HEK293 (cell line): ENCODE measurements at regions of chr6 and their contacts with region 1.

Region 1: GRCh38 chr6:11496152-11497060 is 41.1 kb upstream of the TMEM170B start:
- H3K4me3 ChIP-seq: no peak overlapping the region
- H3K27ac ChIP-seq: no peak overlapping the region
- H3K4me1 ChIP-seq: no peaks in the 10 kb centered on the region
- CTCF ChIP-seq: peak; percentile 83

Region 2: GRCh38 chr6:11144393-11144851 is 352.0 kb before region 1 on chr6:
- CTCF ChIA-PET with region 1: interaction called, 110 read pairs
- POLR2A ChIA-PET with region 1: interaction called, 3 read pairs
- H3K4me3 ChIP-seq: no peak overlapping the region
- H3K27ac ChIP-seq: no peak overlapping the region
- H3K4me1 ChIP-seq: no peaks in the 10 kb centered on the region
- CTCF ChIP-seq: peak; percentile 67; the same call in 1 of the 2 replicates

Region 3: DNA sequence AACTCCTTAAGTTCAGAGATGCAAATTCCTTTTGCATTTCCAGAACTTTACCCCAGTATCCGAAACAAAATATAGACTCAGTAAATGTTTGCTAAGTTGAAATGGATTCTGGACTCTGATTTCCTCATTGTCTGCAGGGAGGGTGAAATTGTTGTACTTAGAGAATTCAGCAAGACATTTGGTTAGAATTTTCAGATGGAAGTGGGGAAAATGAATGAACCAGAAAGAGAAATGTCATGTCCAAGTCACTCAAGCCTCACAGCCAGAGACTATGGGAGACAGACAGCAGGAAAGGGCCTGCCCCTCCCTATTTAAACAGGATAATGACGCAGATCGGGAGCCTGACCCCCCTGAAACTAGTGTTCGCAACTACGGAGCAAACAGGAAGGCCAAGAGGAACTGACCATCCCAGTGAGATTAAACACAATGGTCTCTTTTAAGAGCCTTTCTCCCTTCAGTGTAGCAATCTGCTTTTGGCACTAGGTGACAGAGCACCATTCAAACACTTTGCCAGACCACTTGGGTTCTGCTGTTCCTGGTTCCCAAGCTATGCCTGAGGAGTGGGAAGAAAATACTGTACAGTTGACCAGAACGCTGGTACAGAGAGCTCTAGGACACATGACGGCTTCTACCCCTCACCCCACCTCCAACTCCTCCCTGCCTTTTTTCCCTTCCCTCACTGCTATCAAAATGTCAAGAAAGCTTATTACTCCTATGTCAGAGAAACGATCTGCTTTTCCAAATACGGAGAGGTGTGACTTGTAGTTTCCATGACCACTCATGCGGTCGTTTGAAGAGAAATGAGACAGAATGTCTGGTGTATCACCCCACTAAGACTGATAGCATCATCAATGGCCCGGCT is 277.6 kb before region 1 on chr6:
- CTCF ChIA-PET with region 1: interaction called, 12 read pairs
- POLR2A ChIA-PET with region 1: no interaction called
- H3K4me3 ChIP-seq: no peak overlapping the region
- H3K27ac ChIP-seq: no peak overlapping the region
- H3K4me1 ChIP-seq: peaks cover 26% of the 10 kb centered on the region
- CTCF ChIP-seq: no peak

Region 4: DNA sequence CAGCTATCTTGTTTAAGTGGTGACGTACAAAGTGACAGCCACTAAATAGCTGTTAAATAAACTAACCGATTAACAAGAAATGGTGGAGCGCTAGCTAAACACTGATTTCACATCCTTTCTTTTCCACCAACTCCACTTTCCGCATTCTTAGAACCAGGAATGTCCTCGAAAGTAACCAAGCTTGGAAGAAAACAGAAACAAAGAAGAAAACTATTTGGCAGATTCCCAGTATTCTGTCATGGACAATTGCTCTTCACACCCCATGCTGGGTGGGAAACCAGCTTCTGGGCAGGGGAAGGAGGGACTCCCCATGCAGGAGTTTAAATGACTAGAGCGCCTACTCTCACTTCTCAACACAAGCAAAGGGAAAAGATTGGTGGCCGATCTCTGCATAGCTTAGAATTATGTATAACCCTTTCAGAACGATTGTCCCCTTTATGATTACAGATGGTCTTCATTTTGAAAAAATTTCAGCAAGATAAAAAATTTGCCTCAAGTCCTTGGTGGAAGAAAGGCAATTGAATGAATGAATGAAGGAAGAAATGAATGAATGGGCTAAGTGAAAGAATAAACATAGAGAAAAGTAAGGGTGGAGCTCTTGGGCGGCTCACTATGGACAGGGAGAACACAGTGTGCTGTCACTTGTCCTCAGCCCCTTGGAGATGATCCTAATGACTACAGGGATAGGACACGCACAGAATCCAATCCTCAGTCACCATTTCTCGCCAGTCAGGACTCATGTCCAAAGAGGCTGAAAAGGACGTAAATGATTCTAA is 115.2 kb before region 1 on chr6:
- CTCF ChIA-PET with region 1: interaction called, 12 read pairs
- POLR2A ChIA-PET with region 1: no interaction called
- H3K4me3 ChIP-seq: no peak overlapping the region
- H3K27ac ChIP-seq: no peak overlapping the region
- H3K4me1 ChIP-seq: no peaks in the 10 kb centered on the region
- CTCF ChIP-seq: no peak

Region 5: GRCh38 chr6:11473008-11473740 is 23.2 kb before region 1 on chr6:
- CTCF ChIA-PET with region 1: interaction called, 25 read pairs
- POLR2A ChIA-PET with region 1: no interaction called
- H3K4me3 ChIP-seq: no peak overlapping the region
- H3K27ac ChIP-seq: no peak overlapping the region
- H3K4me1 ChIP-seq: no peaks in the 10 kb centered on the region
- CTCF ChIP-seq: no peak

Region 6: GRCh38 chr6:11563793-11564192 is 67.4 kb after region 1 on chr6:
- CTCF ChIA-PET with region 1: interaction called, 29 read pairs
- POLR2A ChIA-PET with region 1: no interaction called
- H3K4me3 ChIP-seq: no peak overlapping the region
- H3K27ac ChIP-seq: no peak overlapping the region
- H3K4me1 ChIP-seq: no peaks in the 10 kb centered on the region
- CTCF ChIP-seq: no peak

Region 7: DNA sequence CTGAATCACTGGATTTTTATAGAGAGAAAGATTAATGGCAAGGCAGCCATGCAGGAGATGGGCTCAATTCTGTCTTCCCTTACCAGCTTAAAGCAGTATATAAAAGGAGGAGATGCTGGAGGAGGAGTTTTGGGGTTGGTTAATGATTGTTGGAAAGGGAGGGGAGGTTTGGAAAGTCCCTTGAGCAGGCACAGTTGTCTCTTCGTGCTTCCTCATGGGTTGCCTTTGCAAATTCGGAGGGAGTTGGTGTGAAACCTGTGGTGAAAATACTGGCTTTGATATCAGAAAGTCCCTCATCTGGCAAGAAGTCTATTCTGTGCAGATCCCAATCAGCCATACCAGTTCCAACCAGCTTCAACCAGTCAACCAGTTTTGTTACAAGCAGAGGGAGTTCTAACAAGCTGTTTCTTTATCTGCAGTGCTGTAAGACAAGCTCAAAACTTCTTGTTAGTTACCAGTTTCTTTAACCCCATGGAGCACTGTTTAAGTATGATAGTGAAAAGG is 622.7 kb after region 1 on chr6:
- CTCF ChIA-PET with region 1: no interaction called
- POLR2A ChIA-PET with region 1: no interaction called
- H3K4me3 ChIP-seq: no peak overlapping the region
- H3K27ac ChIP-seq: no peak overlapping the region
- H3K4me1 ChIP-seq: no peaks in the 10 kb centered on the region
- CTCF ChIP-seq: no peak